ENCODE measurements at regions of chr9 and their contacts with region 1.

Region 1: DNA sequence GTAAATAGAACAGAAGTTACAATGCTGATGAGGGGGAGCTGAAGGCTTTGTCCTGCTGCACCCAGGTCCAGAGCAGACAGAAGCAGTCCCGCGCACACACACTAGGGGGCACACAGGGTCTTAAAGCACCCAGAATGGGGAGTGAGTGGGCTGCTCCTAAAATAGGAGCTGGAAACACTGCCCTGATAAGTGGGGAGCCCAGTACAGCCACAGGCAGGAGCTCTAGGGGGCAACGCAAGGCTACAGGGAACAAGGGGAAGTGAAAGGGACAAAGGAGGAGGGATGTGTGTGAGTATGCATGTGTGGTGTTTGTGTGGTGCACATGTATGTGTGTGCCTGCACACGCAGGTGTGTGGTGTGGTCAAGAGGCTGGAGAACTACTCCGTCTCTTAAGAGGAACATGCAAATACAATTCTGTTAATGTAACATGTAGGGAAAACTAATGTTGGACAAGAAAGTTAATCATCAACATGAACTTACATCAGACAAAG is 191.5 kb downstream of the ROR2 start:
- DNase-seq: peak; percentile 29
- H3K4me3 ChIP-seq: no peak overlapping the region
- H3K27ac ChIP-seq: no peak overlapping the region
- H3K4me1 ChIP-seq: no peaks in the 10 kb centered on the region
- H3K27me3 ChIP-seq: no peaks in the 10 kb centered on the region
- CTCF ChIP-seq: peak; percentile 76

Region 2: GRCh38 chr9:91795598-91796241 is 37.2 kb after region 1 on chr9:
- CTCF ChIA-PET with region 1: no interaction called
- dilution Hi-C with region 1: no loop called
- in situ Hi-C with region 1: no loop called
- intact Hi-C with region 1: no loop called
- DNase-seq: peak; percentile 63
- H3K4me3 ChIP-seq: no peak overlapping the region
- H3K27ac ChIP-seq: no peak overlapping the region
- H3K4me1 ChIP-seq: no peaks in the 10 kb centered on the region
- H3K27me3 ChIP-seq: no peaks in the 10 kb centered on the region
- CTCF ChIP-seq: no peak

Region 3: DNA sequence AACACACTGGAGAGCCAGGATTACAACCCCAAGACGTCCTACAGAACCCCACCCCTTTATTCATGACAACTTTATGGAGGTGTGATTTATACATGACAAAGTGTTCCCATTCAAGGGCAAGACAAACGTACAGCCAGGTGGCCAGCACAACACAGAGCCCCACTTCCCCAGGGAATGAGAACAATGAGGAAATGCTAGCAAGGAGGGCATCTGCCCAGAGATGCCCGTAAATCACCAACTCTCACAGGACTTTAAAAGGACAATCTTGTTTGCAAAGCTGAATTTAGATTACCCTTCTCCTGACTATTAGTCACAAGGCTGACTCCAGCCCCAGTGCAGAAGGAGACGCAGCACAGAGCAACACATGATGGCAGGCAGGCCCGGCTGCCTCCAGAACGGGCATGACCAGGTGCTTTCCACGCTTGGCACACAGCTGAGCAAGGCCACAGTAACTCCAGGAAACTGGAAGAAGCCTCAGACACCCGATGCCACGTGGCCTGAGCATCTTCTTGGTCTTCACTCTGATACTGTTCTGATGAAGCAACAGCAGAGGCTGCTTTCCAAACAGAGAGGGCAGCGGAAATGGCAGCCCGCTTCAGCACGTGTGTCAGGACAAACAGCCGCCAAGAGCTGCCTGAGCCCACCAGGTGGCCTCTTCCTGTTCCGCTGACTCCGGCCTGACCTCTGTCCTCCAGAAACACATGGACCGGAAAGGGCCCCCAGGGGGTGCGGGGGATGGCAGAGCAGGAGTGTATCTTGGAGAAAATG is 140.1 kb after region 1 on chr9:
- CTCF ChIA-PET with region 1: no interaction called
- dilution Hi-C with region 1: no loop called
- in situ Hi-C with region 1: loop called in 1 of 2 experiments (anchors 25 kb)
- intact Hi-C with region 1: no loop called
- DNase-seq: no peak
- H3K4me3 ChIP-seq: no peak overlapping the region
- H3K27ac ChIP-seq: no peak overlapping the region
- H3K4me1 ChIP-seq: no peaks in the 10 kb centered on the region
- H3K27me3 ChIP-seq: no peaks in the 10 kb centered on the region
- CTCF ChIP-seq: no peak

Region 4: DNA sequence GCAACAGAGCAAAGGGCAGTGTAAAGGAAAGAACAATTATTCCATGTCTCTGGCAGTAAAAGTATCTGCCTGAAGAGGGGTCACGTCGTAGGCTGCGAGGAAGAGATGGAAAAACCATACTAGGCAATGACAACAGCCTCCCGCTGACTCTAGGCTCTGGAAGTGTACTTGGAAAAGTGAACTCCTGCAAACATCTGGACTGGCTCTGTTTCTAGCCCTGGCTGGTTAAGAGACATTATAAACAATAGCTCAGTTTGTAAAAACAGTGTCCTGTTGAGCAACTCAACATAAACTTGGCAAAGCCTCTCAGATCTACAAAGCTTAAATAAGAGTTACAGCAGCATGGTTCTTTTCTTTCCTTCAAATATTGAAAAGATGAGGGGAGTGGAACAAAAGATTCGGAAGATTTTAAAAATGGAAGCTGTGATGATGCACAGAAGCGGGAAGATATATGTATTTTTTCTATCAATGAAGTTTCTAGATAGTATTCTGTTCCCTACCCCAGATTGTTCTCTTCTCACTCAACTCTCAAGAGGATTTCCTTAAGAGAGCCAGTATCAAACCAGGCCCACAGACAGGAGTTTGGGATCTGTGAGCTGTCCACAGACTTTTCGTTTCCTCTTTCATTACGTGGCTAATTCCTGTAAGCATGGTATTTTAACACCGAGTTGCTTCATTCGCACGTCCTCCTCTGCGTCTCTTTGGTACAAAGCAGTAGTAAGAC is 277.3 kb after region 1 on chr9:
- CTCF ChIA-PET with region 1: no interaction called
- dilution Hi-C with region 1: loop called (anchors 5 kb)
- in situ Hi-C with region 1: no loop called
- intact Hi-C with region 1: no loop called
- DNase-seq: no peak
- H3K4me3 ChIP-seq: no peak overlapping the region
- H3K27ac ChIP-seq: no peak overlapping the region
- H3K4me1 ChIP-seq: peaks cover 3% of the 10 kb centered on the region
- H3K27me3 ChIP-seq: no peaks in the 10 kb centered on the region
- CTCF ChIP-seq: no peak